ENCODE measurements at regions of chr2 and their contacts with region 1.

Region 1: DNA sequence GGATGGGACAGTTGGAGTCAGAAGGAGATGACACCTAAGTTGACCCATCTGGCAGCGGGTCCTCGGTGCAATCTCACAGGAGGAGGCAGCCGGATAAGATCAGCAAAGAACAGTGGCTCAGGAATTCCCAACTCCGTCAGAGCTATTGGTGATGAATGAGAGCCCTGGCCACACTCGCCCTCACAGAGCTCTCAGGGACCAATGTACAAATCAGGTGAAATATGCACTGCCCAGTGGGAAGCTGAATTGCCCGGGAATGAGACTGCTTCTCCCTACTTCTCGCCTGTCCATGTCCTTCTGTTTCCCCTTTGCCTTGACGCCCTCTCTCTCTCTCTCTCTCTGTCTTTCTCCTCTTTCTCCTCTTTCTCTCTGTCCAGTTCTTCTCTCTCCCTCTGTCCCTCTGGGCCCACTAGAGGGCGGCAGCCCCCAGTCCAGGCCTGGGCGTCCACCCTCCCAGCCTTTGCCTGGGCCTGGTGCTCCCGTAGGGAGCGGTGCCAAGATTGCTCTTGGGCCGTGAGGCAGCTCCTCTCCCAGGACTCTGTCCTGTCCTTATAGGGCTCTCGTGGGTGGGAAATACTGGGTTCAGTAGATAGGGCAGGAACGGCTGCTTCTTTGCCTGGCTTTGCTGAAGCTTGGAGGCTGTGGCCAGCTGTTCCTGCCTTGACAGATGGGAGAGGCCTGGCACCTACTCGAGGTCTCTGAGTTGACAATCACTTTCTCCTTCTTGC is 28.3 kb upstream of the PUM2 start:
- DNase-seq: peak; percentile 72
- H3K4me3 ChIP-seq: no peak overlapping the region
- H3K27ac ChIP-seq: peak overlapping the region; percentile 31
- H3K27me3 ChIP-seq: peaks cover 2% of the 10 kb centered on the region
- CTCF ChIP-seq: peak; percentile 93

Region 2: DNA sequence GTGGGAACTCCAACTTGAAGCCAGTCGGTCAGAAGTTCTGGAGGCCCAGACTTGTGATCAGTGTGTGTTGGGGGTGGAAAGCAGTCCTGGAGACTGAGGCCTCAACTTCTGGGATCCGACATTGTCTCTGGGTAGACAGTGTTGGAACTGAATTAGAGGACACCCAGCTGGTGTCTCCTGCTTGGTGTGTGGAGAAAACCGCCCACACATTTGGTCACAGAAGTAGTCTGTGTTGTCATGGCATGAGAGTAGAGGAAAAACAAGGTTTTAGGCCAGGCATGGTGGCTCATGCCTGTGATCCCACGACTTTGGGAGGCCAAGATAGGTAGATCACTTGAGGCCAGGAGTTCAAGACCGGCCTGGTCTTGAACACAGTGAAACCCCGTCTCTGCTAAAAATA is 79.8 kb before region 1 on chr2:
- CTCF ChIA-PET with region 1: no interaction called
- POLR2A ChIA-PET with region 1: no interaction called
- DNase-seq: no peak
- H3K4me3 ChIP-seq: no peak overlapping the region
- H3K27ac ChIP-seq: no peak overlapping the region
- H3K27me3 ChIP-seq: no peaks in the 10 kb centered on the region
- CTCF ChIP-seq: no peak

Region 3: GRCh38 chr2:20350753-20351554 is 28.0 kb before region 1 on chr2 and contains the start of gene PUM2:
- CTCF ChIA-PET with region 1: interaction called, 18 read pairs
- POLR2A ChIA-PET with region 1: interaction called, 4 read pairs
- DNase-seq: peak; percentile 78
- H3K4me3 ChIP-seq: peak within 1 kb of the TSS; percentile 81
- H3K27ac ChIP-seq: peak within 1 kb of the TSS; percentile 85
- H3K27me3 ChIP-seq: no peaks in the 10 kb centered on the region
- CTCF ChIP-seq: no peak
- polyA plus RNA-seq, gene PUM2: 42.9 and 53.7 TPM in 2 replicates

Region 4: GRCh38 chr2:20398956-20399567 is 20.1 kb after region 1 on chr2:
- CTCF ChIA-PET with region 1: interaction called, 20 read pairs
- POLR2A ChIA-PET with region 1: no interaction called
- DNase-seq: no peak
- H3K4me3 ChIP-seq: no peak overlapping the region
- H3K27ac ChIP-seq: no peak overlapping the region
- H3K27me3 ChIP-seq: peaks cover 19% of the 10 kb centered on the region
- CTCF ChIP-seq: no peak

Region 5: DNA sequence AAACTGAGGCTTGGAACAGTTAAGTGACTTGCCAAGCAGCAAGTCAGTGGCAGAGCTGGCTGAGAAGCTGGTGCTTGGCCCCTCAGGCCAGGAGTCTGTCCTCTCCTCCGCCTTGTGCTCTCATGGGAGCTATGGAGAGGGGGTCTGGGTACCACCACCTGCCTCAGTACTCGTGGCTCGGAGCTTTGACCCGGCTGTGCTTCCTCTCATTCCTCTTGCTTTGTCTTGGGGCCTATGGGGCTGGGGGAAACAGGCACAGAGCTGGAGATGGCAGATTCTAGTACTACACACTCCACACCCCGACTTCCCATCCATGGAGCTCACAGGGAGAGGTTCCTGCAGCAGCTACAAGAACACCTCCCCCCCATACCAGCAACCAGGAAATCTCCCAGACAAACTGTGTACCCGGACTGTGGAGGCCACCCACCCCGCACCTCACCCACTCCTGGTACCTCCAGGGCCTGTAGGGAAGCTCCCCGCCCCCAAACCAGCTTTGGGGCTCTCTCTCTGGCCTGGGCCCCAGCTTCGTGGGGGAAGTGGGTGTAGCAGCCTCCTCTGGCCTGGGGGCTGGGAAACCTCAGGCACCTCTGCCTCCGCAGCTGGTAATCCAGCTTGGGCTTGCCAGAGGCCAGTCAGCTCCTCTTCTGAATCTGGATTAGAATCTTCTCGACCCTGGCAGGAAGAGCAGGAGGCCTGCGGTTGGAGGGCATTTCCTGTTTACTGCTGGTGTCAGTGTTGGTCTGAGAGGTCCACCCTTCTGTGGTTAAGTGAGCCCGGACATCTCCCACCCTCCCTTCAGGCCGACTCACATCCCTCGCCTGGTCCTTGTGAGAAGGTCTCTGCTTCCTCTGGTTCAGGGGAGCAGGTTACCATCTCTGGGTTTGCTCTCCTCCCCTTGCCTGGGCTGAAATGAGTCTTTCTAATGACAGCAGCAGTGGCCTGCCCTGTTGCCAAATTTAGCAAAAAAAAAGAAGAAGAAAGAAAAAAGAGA is 45.6 kb after region 1 on chr2:
- CTCF ChIA-PET with region 1: interaction called, 42 read pairs
- POLR2A ChIA-PET with region 1: no interaction called
- DNase-seq: peak; percentile 81
- H3K4me3 ChIP-seq: no peak overlapping the region
- H3K27ac ChIP-seq: no peak overlapping the region
- H3K27me3 ChIP-seq: no peaks in the 10 kb centered on the region
- CTCF ChIP-seq: no peak

Region 6: GRCh38 chr2:20635675-20636584 is 257.0 kb after region 1 on chr2:
- CTCF ChIA-PET with region 1: interaction called, 20 read pairs
- POLR2A ChIA-PET with region 1: interaction called, 4 read pairs
- DNase-seq: peak; percentile 53
- H3K4me3 ChIP-seq: no peak overlapping the region
- H3K27ac ChIP-seq: no peak overlapping the region
- H3K27me3 ChIP-seq: no peaks in the 10 kb centered on the region
- CTCF ChIP-seq: peak; percentile 96

Region 7: DNA sequence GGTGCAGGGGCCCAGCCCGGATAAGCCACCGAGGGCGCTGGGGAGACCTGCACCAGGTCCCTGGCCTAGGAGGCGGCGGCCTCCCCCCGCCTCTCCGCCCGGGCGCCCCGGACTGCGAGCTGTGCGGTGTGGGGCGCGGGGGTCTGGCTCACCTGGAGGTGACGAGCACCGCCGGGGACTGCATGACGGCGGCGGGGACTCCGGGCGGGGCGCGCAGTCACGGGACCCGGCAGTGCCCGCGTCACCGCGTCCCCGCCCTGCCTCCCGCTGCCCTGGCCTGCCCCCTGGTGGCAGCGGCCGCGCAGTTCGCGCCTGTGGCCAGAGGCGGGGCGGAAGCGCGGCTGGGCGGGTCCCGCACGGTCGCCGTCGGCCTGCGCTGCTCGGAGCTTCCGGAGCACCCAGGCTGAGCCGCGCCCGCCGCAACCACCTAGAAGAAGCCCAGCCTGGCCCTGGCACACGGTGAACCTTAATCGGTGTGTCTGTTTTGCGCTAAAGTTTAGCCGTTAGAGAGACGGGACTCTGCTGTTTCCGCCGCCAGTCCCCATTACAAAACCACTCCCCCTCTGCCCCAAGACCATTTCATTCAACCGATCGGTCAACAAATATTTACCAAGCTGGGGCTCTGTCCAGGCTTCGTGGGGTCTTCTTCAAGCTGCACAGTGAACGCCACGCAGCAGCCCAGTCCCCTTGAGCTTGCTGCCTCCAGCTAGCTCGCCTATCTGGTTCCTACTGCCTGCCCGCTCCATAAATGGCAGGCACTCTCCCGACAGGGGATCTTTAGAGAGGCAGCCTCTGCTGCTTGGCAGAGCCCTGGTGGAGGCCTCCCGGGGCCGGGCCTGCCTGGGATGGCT is 272.1 kb after region 1 on chr2 and contains the start of gene HS1BP3:
- CTCF ChIA-PET with region 1: interaction called, 16 read pairs
- POLR2A ChIA-PET with region 1: no interaction called
- DNase-seq: no peak
- H3K4me3 ChIP-seq: peak within 1 kb of the TSS; percentile 92
- H3K27ac ChIP-seq: peak within 1 kb of the TSS; percentile 3
- H3K27me3 ChIP-seq: peaks cover 15% of the 10 kb centered on the region
- CTCF ChIP-seq: peak; percentile 54
- polyA plus RNA-seq, gene HS1BP3: 14.2 and 16.1 TPM in 2 replicates